ENCODE measurements at regions of chr20 and their contacts with region 1.

Region 1: DNA sequence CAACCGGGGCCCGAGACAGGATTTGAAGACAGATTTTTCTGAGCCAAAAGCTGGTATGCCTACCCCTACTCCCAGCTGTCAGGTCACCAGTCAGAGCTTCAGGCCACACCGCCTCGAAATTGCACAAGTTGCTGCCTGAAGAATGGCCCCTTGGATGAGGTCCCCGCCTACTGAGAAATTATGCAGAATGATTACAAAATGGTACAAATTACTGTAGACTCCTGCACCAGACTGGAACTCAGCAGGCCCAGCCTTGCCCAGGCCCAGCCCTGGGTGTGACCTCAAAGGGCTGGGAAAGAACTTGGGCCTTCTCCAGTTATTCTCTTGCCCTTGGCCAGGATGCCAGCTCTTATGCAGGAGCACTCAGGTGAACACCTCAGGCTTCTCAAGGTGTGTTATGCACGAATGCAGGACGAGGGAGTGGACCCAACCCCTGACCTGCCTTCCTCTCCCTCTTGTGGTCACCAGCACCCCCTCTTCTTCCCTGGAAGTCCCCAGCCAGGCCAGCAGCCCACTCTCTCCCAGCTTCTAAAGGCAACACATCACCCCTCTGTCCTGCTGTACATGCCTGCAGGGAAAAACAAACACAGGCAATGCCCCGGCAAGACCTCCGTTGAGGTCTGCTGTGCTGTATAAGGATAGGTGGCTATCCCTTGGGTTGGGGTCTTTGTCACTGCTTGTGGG is 88.7 kb upstream of the NAA20 start:
- DNase-seq: peak; percentile 97
- H3K4me3 Mint-ChIP-seq: peak overlapping the region; percentile 14
- H3K27ac Mint-ChIP-seq: peak overlapping the region; percentile 90
- H3K4me1 Mint-ChIP-seq: peaks cover 19% of the 10 kb centered on the region
- H3K27me3 Mint-ChIP-seq: no peaks in the 10 kb centered on the region
- CTCF ChIP-seq: no peak

Region 2: GRCh38 chr20:19815553-19815991 is 112.9 kb before region 1 on chr20:
- CTCF ChIA-PET with region 1: no interaction called
- POLR2A ChIA-PET with region 1: interaction called, 17 read pairs
- intact Hi-C with region 1: no loop called
- DNase-seq: peak; percentile 95
- H3K4me3 Mint-ChIP-seq: peak overlapping the region; percentile 44
- H3K27ac Mint-ChIP-seq: peak overlapping the region; percentile 90
- H3K4me1 Mint-ChIP-seq: peaks cover 20% of the 10 kb centered on the region
- H3K27me3 Mint-ChIP-seq: no peaks in the 10 kb centered on the region
- CTCF ChIP-seq: no peak

Region 3: DNA sequence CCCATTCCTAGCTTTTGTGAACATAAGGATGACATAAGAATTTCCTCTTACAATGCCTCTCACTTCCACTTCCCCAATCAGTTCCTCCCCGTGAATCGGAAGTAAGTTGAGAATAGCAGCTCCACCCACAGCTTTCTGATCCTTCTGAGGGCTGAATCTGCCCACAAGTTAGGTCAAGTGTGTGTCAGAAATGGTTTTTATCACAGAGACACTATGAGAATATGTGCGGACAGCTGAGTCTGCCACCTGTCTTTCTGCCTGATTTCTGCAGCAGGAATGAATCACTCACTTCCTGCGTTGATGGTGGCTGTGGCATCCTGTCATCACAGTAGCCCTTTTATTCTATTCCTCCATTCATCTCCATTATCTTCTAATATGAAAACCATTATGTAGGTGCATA is 100.2 kb before region 1 on chr20:
- CTCF ChIA-PET with region 1: interaction called, 4 read pairs
- POLR2A ChIA-PET with region 1: interaction called, 11 read pairs
- intact Hi-C with region 1: no loop called
- DNase-seq: peak; percentile 72
- H3K4me3 Mint-ChIP-seq: peak overlapping the region; percentile 9
- H3K27ac Mint-ChIP-seq: peak overlapping the region; percentile 60
- H3K4me1 Mint-ChIP-seq: peaks cover 17% of the 10 kb centered on the region
- H3K27me3 Mint-ChIP-seq: no peaks in the 10 kb centered on the region
- CTCF ChIP-seq: peak; percentile 46

Region 4: DNA sequence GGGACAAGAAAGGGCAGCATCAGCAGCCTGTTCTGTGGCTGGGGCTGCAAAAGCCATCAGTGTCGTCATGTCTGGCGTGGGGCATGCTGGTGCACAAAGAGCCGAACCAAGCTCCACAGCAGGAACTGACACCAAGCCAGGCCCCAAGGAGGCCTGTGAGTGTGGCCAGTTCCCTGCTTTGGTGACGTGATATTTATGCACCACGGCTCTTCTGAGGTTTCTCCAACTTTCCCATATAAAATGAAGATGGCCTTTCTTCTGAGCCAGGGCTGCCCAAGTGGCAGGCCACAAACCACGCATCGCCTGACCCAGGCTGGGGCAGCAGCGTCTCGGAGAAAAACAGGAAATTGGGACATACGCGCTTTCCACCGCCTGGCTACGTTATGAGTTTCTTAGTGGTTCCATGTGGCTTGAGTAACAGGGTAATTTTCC is 60.5 kb before region 1 on chr20:
- CTCF ChIA-PET with region 1: no interaction called
- POLR2A ChIA-PET with region 1: no interaction called
- intact Hi-C with region 1: no loop called
- DNase-seq: no peak
- H3K4me3 Mint-ChIP-seq: no peak overlapping the region
- H3K27ac Mint-ChIP-seq: peak overlapping the region; percentile 80
- H3K4me1 Mint-ChIP-seq: peaks cover 9% of the 10 kb centered on the region
- H3K27me3 Mint-ChIP-seq: no peaks in the 10 kb centered on the region
- CTCF ChIP-seq: no peak

Region 5: DNA sequence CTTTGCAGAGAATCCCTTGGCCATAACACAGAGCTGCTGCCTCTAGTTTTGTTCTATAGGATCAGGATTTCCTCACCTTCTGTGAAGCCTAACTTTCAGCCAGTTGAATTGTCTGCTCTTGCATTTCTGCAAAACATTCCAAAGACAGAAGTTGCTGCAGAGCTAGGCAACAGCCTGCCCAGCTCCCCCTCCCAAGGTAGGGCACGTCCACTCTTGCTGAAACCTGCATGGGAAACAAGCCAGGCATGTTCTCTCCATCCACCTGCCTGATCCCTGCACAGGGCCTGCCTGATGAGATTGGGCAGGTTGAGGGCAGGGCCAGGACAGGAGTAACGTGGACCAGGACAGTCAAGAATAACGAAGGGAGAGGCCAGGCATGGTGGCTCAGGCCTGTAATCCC is 29.7 kb after region 1 on chr20:
- CTCF ChIA-PET with region 1: interaction called, 3 read pairs
- POLR2A ChIA-PET with region 1: interaction called, 38 read pairs
- intact Hi-C with region 1: loop called (anchors 5 kb)
- DNase-seq: peak; percentile 67
- H3K4me3 Mint-ChIP-seq: no peak overlapping the region
- H3K27ac Mint-ChIP-seq: peak overlapping the region; percentile 61
- H3K4me1 Mint-ChIP-seq: peaks cover 6% of the 10 kb centered on the region
- H3K27me3 Mint-ChIP-seq: no peaks in the 10 kb centered on the region
- CTCF ChIP-seq: no peak

Region 6: DNA sequence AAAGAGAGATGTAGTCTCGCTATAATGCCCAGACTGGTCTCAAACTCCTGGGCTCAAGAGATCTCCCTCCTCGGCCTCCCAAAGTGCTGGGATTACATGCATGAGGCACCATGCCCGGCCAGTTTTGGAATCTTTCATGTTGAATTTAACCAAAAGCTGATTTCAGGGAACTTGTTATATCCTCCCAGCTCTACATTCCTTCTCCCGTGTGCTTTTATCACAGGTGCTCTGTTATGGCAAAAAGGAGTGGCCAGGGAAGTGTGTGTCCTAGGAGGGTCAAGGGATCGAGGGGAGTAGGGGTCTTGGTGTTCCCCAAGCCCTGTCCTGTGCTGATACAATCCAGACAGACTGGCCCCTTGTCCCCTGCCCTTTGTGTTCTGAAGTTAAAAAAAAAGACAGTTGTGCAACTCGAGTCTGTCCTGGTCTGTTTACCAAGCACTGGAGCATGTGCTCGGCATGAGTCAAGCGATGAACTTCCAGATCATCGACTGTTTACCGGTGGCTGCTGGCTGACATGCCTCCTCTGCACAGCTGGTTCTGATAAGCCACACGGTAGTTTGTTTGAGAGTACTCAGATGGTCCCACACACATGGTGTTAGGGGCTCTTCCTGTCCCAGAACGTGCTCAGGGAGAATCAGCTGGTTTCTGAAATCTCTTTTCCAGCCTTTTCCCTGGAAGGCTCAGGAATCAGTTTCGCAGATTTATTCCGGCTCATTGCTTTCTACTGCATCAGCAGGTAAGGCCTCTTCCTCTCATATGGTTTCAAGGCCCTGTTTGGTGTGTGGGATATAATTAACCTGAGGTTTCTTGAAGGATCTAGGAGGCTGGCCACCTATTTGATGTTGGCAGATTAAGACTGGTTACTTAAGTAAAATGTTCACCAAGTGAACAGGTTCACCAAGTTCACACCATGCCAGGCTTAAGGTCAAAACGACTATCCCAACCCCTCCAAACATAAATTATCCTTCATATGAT is 36.1 kb after region 1 on chr20:
- CTCF ChIA-PET with region 1: interaction called, 3 read pairs
- POLR2A ChIA-PET with region 1: interaction called, 38 read pairs
- intact Hi-C with region 1: loop called (anchors 5 kb)
- DNase-seq: peak; percentile 80
- H3K4me3 Mint-ChIP-seq: no peak overlapping the region
- H3K27ac Mint-ChIP-seq: peak overlapping the region; percentile 87
- H3K4me1 Mint-ChIP-seq: peaks cover 15% of the 10 kb centered on the region
- H3K27me3 Mint-ChIP-seq: no peaks in the 10 kb centered on the region
- CTCF ChIP-seq: no peak

Measured in MCF 10A (cell line).